Activated CD4-positive, alpha-beta T cell treated with anti-CD3 and anti-CD28 coated beads, Interleukin-2, amount 10 ng/mL, durations not matched to agents 24 days and 14 days (primary cell): ENCODE measurements at regions of chr6 and their contacts with region 1.

Region 1: GRCh38 chr6:3258720-3259490 is at the start of gene PSMG4:
- DNase-seq: peak; percentile 98
- H3K4me3 Mint-ChIP-seq: peak within 1 kb of the TSS; percentile 96
- H3K27ac Mint-ChIP-seq: peak within 1 kb of the TSS; percentile 98
- H3K4me1 Mint-ChIP-seq: peaks cover 33% of the 10 kb centered on the region
- H3K27me3 Mint-ChIP-seq: peaks cover 19% of the 10 kb centered on the region
- total RNA-seq, gene PSMG4: 33.4 and 35.6 TPM in 2 replicates

Region 2: GRCh38 chr6:2988426-2989331 is 270.2 kb before region 1 on chr6:
- intact Hi-C with region 1: loop called (anchors 2 kb)
- DNase-seq: peak; percentile 93
- H3K4me3 Mint-ChIP-seq: peak overlapping the region; percentile 89
- H3K27ac Mint-ChIP-seq: peak overlapping the region; percentile 99
- H3K4me1 Mint-ChIP-seq: peaks cover 22% of the 10 kb centered on the region
- H3K27me3 Mint-ChIP-seq: peaks cover 3% of the 10 kb centered on the region

Region 3: GRCh38 chr6:3068329-3069214 is 190.3 kb before region 1 on chr6 and contains the start of gene RIPK1:
- intact Hi-C with region 1: loop called (anchors 1 kb)
- DNase-seq: peak; percentile 99
- H3K4me3 Mint-ChIP-seq: peak within 1 kb of the TSS; percentile 98
- H3K27ac Mint-ChIP-seq: peak within 1 kb of the TSS; percentile 97
- H3K4me1 Mint-ChIP-seq: peaks cover 47% of the 10 kb centered on the region
- H3K27me3 Mint-ChIP-seq: no peaks in the 10 kb centered on the region
- total RNA-seq, gene RIPK1: 17.0 and 17.9 TPM in 2 replicates

Region 4: GRCh38 chr6:3125815-3126214 is 133.1 kb before region 1 on chr6:
- intact Hi-C with region 1: loop called (anchors 2 kb)
- DNase-seq: no peak
- H3K4me3 Mint-ChIP-seq: no peak overlapping the region
- H3K27ac Mint-ChIP-seq: no peak overlapping the region
- H3K4me1 Mint-ChIP-seq: peaks cover 4% of the 10 kb centered on the region
- H3K27me3 Mint-ChIP-seq: no peaks in the 10 kb centered on the region

Region 5: DNA sequence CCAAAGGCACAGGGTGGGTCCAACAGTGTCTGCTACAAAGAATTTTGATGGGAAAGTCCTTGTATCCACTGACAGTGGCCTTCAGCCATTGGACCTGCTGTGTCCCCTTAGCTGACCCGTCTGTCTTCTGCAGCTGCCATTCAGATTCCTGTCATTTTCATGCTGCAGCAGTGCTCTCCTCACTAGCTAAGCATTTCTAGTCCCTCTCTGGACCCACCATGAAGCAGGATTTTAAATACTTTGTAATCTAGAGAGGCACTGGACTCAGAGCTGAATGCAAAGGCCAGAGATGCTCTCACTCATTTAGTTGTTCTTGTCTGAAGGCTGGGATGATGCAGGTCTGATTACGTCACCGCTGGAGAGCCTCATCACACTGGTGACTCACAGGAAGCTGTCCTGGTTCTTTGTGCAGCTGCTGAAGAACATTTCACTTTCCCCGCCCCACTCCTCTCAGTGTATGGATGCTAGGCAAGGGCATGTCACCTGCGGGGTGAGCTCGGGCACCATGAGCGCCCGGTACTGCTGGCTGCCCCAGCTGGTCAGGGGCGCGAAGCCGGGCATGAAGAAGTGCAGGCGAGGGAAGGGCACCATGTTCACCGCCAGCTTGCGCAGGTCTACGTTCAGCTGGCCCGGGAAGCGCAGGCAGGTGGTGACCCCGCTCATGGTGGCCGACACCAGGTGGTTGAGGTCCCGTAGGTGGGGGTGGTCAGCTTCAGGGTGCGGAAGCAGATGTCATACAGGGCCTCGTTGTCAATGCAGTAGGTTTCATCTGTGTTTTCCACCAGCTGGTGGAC is 82.1 kb before region 1 on chr6:
- intact Hi-C with region 1: no loop called
- DNase-seq: peak; percentile 75
- H3K4me3 Mint-ChIP-seq: no peak overlapping the region
- H3K27ac Mint-ChIP-seq: no peak overlapping the region
- H3K4me1 Mint-ChIP-seq: peaks cover 2% of the 10 kb centered on the region
- H3K27me3 Mint-ChIP-seq: peaks cover 12% of the 10 kb centered on the region

Region 6: GRCh38 chr6:3294921-3295871 is 36.3 kb after region 1 on chr6:
- intact Hi-C with region 1: no loop called
- DNase-seq: no peak
- H3K4me3 Mint-ChIP-seq: no peak overlapping the region
- H3K27ac Mint-ChIP-seq: no peak overlapping the region
- H3K4me1 Mint-ChIP-seq: no peaks in the 10 kb centered on the region
- H3K27me3 Mint-ChIP-seq: no peaks in the 10 kb centered on the region

Region 7: GRCh38 chr6:4018172-4018905 is 759.4 kb after region 1 on chr6:
- intact Hi-C with region 1: loop called (anchors 10 kb)
- DNase-seq: peak; percentile 99
- H3K4me3 Mint-ChIP-seq: peak overlapping the region; percentile 94
- H3K27ac Mint-ChIP-seq: peak overlapping the region; percentile 98
- H3K4me1 Mint-ChIP-seq: peaks cover 46% of the 10 kb centered on the region
- H3K27me3 Mint-ChIP-seq: no peaks in the 10 kb centered on the region